HEK293 (cell line): ENCODE measurements at regions of chr11 and their contacts with region 1.

Region 1: DNA sequence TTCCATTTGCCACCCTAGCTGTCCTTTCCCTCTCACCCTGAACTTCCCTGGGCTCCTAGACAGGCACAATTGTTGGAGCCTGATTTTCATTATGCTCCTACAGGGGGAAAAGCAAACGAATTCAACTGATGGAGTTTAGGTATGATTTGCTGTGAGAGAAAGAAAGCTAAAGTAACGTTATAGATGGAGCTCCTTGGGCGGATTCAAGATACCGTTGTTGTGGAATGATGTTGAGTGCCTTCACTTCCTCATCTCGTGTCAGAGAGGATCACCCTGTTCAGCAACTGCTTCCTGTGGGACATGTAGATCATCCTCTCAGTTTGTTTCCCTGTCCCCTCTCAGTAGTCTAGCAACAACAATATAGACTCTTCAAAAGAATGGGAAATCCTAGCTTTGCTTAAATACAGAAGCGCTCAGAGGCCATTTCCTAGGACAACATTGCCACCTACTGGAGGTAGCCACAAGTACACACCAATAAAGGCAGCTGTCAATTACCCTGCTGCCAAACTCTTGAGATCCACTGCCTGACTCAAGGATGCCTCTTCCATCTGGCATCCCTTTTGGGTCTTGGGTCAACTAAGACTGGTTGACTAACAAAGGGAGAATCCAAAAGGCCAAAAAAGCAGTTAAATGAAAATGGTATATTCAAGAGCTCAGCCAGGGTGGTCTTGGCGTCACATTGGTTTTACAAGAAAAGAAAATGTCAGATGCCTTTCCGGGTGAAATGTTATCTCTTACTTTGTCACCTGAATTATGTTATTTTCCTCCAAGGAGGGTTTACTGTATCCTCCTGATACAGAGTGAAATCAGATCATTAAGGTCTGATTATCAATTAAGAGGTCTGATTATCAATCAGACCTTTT is 13.5 kb upstream of the DTX4 start:
- H3K4me3 ChIP-seq: no peak overlapping the region
- H3K27ac ChIP-seq: no peak overlapping the region
- H3K4me1 ChIP-seq: no peaks in the 10 kb centered on the region
- CTCF ChIP-seq: peak; percentile 42; the same call in 1 of the 2 replicates

Region 2: DNA sequence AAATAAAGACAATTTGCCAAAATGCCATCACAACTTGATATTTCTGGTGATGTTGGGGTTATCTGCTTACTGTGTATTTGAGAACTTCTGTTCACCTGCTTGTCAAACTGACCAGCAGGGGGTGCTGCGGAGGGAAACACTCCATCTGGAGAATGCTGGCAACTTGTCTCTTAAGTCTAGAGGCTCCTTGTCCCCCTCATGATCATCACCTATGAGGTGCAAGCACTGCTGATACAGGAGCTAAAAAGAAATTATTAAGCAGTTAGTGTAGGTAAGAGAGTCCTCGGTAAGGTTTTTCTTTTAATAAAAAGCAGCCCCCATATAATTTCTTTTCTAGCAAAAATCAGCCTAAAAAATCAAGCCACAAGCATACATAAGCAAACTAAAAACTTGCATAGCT is 105.0 kb before region 1 on chr11:
- CTCF ChIA-PET with region 1: interaction called, 12 read pairs
- POLR2A ChIA-PET with region 1: no interaction called
- H3K4me3 ChIP-seq: no peak overlapping the region
- H3K27ac ChIP-seq: no peak overlapping the region
- H3K4me1 ChIP-seq: no peaks in the 10 kb centered on the region
- CTCF ChIP-seq: no peak

Region 3: DNA sequence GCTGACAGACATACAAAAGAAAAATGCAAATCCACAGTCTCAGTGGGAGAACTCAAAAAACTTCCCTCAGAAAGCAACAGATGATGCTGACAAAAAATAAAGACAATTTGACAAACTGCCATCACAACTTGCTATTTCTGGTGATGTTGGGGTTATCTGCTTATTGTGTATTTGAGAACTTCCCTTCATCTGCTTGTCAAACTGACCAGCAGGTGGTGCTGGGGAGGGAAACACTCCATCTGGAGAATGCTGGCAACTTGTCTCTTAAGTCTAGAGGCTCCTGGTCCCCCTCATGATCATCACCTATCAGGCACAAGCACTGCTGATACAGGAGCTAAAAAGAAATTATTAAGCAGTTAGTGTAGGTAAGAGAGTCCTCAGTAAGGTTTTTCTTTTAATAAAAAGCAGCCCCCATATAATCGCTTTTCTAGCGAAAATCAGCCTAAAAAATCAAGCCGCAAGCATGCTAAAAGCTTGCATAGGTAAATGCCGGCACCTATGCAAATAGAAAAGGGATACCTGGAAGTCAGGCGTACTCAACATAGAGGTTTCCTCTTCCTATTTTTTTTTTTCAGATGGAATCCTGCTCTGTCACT is 61.2 kb before region 1 on chr11:
- CTCF ChIA-PET with region 1: interaction called, 10 read pairs
- POLR2A ChIA-PET with region 1: no interaction called
- H3K4me3 ChIP-seq: no peak overlapping the region
- H3K27ac ChIP-seq: no peak overlapping the region
- H3K4me1 ChIP-seq: no peaks in the 10 kb centered on the region
- CTCF ChIP-seq: 0 out of 2 replicates have a peak, but pooled peaks have one; percentile 10

Region 4: DNA sequence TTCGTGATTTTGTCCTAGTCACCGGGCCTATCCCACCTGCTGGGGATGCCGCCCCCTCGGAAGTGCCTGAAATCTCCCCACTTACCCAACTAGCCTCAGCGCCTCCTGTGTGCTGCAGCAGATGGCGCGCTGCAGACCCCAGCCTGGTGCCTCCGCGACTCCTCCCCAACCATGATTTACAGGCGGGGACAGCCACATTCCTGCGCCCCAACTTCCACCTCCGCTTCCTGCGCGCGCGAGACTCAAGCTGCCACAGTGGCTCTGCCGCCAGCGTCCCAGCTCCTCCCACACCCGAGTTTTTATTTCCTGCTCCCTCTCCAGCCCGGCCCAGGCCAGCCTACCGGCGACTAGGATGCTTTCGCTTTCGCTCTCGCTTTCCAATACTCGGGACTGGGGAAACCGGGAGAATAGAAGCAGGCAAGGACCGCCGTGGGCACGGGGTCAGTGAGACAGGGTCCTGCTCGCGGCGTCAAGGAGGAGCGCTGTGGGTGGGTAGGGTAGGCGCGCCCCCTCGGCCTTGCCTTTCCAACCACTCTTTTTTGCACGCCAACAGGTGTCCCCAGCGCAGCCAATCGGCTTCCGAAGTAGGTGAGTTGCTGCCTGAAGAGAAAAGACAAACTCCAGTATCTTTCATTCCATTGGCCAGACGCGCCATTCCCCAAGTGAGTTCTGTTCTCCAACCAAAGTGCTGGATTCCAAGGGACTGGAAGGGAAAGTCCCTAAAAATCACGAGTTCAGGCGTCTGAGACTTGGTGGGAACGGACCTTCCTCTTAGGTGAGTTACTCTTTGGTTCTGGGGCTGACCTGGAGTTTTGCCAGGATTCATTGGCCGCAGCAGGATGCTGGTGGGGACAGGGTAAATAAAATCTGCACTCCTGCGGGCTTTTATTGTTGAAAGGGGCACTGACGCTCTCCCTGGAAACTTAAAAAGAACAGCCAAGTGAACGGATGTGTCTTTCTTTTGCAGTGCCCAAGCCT is 15.6 kb before region 1 on chr11 and contains the start of gene FAM111A:
- CTCF ChIA-PET with region 1: interaction called, 37 read pairs
- POLR2A ChIA-PET with region 1: interaction called, 5 read pairs
- H3K4me3 ChIP-seq: peak within 1 kb of the TSS; percentile 78
- H3K27ac ChIP-seq: peak within 1 kb of the TSS; percentile 74
- H3K4me1 ChIP-seq: no peaks in the 10 kb centered on the region
- CTCF ChIP-seq: peak; percentile 65